Activated naive CD4-positive, alpha-beta T cell treated with anti-CD3 and anti-CD28 coated beads, Interleukin-2, amount 10 ng/mL, durations not matched to agents 7 days and 5 days (primary cell): ENCODE measurements at regions of chr9 and their contacts with region 1.

Region 1: GRCh38 chr9:19925817-19926503 is 137.1 kb upstream of the SLC24A2 start:
- DNase-seq: peak; percentile 87
- H3K4me3 Mint-ChIP-seq: peak overlapping the region; percentile 70
- H3K27ac Mint-ChIP-seq: peak overlapping the region; percentile 50
- H3K4me1 Mint-ChIP-seq: peaks cover 47% of the 10 kb centered on the region
- H3K27me3 Mint-ChIP-seq: peaks cover 16% of the 10 kb centered on the region

Region 2: GRCh38 chr9:19408693-19409400 is 517.1 kb before region 1 on chr9 and contains the start of gene ACER2:
- CTCF ChIA-PET with region 1: no interaction called
- DNase-seq: peak; percentile 95
- H3K4me3 Mint-ChIP-seq: peak within 1 kb of the TSS; percentile 94
- H3K27ac Mint-ChIP-seq: no peak within 1 kb of the TSS
- H3K4me1 Mint-ChIP-seq: peaks cover 18% of the 10 kb centered on the region
- H3K27me3 Mint-ChIP-seq: peaks cover 27% of the 10 kb centered on the region

Region 3: GRCh38 chr9:19464764-19465585 is 461.0 kb before region 1 on chr9:
- CTCF ChIA-PET with region 1: interaction called, 15 read pairs
- DNase-seq: peak; percentile 72
- H3K4me3 Mint-ChIP-seq: peak overlapping the region; percentile 76
- H3K27ac Mint-ChIP-seq: no peak overlapping the region
- H3K4me1 Mint-ChIP-seq: peaks cover 13% of the 10 kb centered on the region
- H3K27me3 Mint-ChIP-seq: peaks cover 10% of the 10 kb centered on the region